Activated B cell treated with CpG ODN at 0.5 μM for 24 hours (primary cell): ENCODE measurements at regions of chr10 and their contacts with region 1.

Region 1: DNA sequence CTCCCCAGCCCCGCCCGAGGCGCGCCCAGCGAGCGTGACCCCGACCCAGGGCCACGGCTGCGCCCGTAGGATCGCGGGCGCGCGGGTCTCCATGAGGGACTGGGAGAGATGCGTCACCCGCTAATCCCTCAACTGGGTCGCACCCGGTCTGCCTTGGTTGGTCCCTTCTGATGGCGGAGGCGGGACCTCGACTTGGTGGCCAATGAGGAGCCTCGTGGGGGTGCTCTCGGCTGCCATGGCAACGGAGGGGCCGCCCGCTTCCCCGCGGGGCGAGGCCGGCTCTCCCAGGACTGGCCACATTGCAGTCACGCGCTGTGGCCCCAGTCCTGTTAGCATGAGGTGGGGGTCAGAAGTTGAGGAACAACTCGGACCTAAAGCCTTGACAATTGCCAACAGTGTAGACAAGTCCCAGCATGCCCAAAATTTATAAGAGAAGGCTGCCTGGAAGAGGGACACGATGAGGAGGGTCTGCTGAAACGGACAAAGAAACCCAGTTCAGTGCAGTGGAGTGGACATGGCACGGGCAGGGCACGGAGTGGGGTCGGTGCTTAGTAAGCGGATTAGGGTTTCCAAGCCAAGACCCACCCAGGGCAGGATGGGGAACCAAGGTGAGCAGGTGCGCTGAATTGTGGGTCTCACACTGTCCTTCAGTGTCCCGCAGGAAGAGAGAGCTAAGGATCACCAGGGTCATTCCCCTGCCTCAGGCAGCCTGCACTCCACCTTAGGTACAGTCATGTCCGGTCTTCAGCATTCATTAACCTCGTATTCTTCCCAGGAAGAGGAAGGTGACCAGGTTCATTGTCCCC is 24.4 kb downstream of the DDIT4 start:
- DNase-seq: peak; percentile 89
- ATAC-seq: peak; percentile 72
- H3K4me3 Mint-ChIP-seq: peak overlapping the region; percentile 86
- H3K27ac Mint-ChIP-seq: peak overlapping the region; percentile 100
- H3K4me1 Mint-ChIP-seq: peaks cover 73% of the 10 kb centered on the region
- H3K27me3 Mint-ChIP-seq: no peaks in the 10 kb centered on the region
- CTCF ChIP-seq: no peak

Region 2: DNA sequence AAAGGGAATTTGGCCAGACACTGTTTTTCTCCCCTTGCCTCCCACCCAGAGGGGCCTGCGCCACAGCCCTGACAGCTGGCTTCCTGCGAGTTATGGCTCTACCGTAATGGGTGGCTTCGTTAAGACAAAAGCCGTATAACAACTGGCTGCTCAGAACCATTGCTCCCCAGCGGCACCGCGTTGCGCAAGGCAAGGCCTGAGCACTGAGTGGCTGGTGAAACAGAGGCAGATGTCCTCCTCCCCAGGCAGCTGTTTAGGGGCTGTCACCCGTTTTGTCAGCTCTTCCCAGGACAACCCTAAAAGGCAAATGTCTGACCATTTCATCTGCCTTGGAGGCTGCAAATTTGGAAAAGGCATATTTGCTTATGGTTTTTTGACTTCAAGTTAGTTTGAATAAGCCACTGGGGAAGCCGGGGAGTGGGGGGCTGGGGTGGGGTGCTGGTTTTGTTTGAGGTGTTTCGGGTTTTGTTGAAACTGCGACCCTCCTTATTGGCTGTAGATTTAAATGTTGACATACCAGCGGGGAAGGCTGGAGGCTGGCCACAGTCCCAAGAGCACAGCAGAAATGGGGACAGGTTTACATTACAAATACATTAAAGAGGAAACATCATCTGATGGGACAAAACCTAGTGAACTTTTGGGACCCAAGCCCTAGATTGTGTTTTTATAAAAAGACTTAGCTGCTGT is 209.1 kb before region 1 on chr10:
- CTCF ChIA-PET with region 1: no interaction called
- POLR2A ChIA-PET with region 1: interaction called, 18 read pairs
- intact Hi-C with region 1: no loop called
- DNase-seq: peak; percentile 29
- ATAC-seq: peak; percentile 27
- H3K4me3 Mint-ChIP-seq: peak overlapping the region; percentile 99
- H3K27ac Mint-ChIP-seq: peak overlapping the region; percentile 97
- H3K4me1 Mint-ChIP-seq: peaks cover 39% of the 10 kb centered on the region
- H3K27me3 Mint-ChIP-seq: no peaks in the 10 kb centered on the region
- CTCF ChIP-seq: no peak

Region 3: DNA sequence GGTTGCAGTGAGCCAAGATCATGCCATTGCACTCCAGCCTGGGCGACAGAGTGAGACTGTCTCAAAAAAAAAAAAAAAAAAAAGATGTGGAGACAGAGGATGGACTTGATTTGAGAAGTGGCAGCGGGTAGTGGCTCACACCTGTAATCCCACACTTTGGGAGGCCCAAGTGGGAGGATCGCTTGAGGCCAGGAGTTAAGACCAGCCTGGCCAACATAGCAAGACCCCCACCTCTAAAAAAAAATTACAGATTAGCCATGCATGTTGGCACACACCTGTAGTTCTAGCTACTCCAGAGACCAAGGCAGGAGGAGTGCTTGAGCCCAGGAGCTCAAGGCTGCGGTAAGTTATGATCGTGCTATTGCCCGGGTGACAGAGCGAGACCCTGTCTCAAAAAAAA is 57.8 kb before region 1 on chr10:
- CTCF ChIA-PET with region 1: no interaction called
- POLR2A ChIA-PET with region 1: interaction called, 15 read pairs
- intact Hi-C with region 1: no loop called
- DNase-seq: no peak
- ATAC-seq: no peak
- H3K4me3 Mint-ChIP-seq: no peak overlapping the region
- H3K27ac Mint-ChIP-seq: no peak overlapping the region
- H3K4me1 Mint-ChIP-seq: peaks cover 52% of the 10 kb centered on the region
- H3K27me3 Mint-ChIP-seq: no peaks in the 10 kb centered on the region
- CTCF ChIP-seq: no peak

Region 4: DNA sequence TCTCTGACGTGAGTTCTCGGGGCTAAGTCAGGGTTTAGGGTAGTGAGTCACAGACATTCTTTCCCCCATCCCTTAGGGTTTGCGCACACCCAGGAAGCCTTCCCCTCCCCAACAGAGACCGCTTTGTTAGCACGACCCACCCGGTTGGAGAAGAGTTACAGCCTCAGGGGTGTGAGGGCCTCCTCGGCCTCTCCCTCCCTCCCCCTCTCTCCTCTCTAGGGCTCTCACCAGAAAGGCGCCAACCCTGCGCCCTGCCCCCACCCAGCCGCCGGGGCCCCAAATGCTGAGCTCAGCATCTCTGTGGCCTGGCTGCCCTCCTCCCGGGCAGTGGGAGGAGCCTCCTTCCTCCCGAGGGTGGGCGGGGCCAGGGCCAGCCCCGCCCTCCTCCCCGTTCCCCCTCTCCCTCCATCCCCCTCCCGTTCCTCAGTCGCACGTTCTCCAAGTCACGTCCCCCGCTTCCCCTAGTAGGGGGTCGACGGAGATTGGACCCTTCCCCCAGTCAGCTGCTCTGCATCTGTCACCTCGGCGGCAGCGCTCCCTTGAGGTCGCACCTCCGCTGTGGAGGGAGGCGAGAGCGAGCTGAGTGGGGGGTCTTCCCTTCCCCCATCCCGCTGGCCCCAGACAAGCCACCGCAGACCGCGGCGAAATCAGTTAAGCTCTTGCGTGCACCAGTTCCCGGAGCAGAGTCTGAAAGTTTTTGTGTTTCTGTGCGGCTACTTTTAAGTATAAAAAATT is 37.4 kb before region 1 on chr10:
- CTCF ChIA-PET with region 1: interaction called, 5 read pairs
- POLR2A ChIA-PET with region 1: interaction called, 145 read pairs
- intact Hi-C with region 1: loop called (anchors 1 kb)
- DNase-seq: peak; percentile 70
- ATAC-seq: peak; percentile 71
- H3K4me3 Mint-ChIP-seq: peak overlapping the region; percentile 91
- H3K27ac Mint-ChIP-seq: peak overlapping the region; percentile 96
- H3K4me1 Mint-ChIP-seq: peaks cover 58% of the 10 kb centered on the region
- H3K27me3 Mint-ChIP-seq: no peaks in the 10 kb centered on the region
- CTCF ChIP-seq: no peak

Region 5: DNA sequence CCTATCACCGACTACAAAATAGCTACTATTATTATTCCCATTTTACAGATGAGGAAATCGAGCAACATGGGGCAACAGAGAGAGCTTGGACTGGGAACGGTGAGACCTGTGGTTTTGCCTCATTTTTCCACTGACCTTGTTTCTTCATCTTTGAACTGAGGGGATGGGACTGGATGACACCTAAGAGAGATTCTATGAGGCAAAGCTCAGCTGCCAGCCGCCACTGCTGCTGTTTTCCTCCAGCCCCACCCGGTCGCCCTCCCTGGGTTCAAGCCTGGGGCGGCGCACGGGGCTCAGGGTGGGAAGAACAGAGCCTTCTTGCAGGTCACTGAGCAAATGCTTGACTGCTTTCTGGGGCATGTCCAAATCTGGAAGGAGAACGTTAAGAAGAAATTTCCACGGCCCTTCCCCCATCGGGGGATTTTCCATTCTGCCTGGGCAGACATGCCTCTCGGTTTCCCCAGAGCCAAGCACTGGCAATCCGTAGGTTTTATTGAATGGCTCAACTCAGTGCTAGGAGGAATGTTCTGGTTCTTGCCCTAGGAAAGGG is 12.1 kb before region 1 on chr10:
- CTCF ChIA-PET with region 1: interaction called, 4 read pairs
- POLR2A ChIA-PET with region 1: interaction called, 40 read pairs
- intact Hi-C with region 1: loop called (anchors 1 kb)
- DNase-seq: no peak
- ATAC-seq: peak; percentile 11
- H3K4me3 Mint-ChIP-seq: peak overlapping the region; percentile 33
- H3K27ac Mint-ChIP-seq: peak overlapping the region; percentile 73
- H3K4me1 Mint-ChIP-seq: peaks cover 40% of the 10 kb centered on the region
- H3K27me3 Mint-ChIP-seq: no peaks in the 10 kb centered on the region
- CTCF ChIP-seq: no peak

Region 6: DNA sequence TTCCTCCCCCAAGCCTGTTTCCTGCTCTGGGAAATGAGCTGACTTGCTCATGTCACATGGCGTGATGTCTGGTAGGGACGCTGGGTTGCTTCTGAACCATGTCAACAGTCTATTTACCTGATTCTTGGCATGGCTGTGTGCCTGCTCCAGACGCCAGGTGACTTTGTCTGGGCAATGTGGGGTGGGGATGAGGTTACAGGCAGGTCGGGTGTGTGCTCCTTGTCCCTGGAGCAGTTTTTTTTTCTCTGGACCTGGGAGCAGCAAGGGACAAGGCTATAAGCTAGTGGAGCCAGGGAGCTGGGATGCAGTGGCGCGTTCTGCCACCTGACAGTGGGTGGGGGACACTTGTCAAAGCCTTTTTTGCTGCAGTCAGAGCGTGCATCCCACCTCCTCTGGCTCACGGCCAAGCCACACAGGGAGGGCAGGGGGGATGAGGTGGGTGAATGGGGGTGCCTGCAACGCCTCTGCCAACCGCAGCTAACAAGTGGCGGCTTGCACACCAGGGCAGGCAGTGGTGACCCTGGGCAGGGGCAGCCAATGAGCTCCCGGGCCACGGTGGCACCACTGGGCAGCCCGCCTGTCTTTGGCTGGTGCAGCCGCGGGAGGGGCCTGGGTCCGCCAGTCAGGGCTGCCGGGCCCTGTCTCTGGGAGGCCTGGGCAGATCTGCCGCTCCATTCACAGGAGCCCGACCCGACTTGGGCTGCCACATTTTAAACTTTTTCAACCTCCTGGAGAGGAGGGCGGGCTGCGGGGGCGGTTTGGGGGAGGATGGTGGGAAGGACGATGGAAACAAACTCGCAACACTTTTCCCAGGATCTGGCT is 33.6 kb after region 1 on chr10:
- CTCF ChIA-PET with region 1: interaction called, 17 read pairs
- POLR2A ChIA-PET with region 1: interaction called, 1,996 read pairs
- intact Hi-C with region 1: loop called (anchors 1 kb)
- DNase-seq: peak; percentile 81
- ATAC-seq: peak; percentile 82
- H3K4me3 Mint-ChIP-seq: peak overlapping the region; percentile 71
- H3K27ac Mint-ChIP-seq: peak overlapping the region; percentile 94
- H3K4me1 Mint-ChIP-seq: peaks cover 93% of the 10 kb centered on the region
- H3K27me3 Mint-ChIP-seq: no peaks in the 10 kb centered on the region
- CTCF ChIP-seq: no peak